Activated T-helper 1 cell treated with anti-CD3 and anti-CD28 coated beads, Interleukin-12 subunit alpha, Interleukin-12 subunit beta, Interleukin-2, Interleukin-4 antibody, amounts not matched to agents 30 ng/mL and 10 ng/mL and 1 ng/mL, durations not matched to agents 14 hours and 24 hours and 36 hours (primary cell): ENCODE measurements at regions of chr15 and their contacts with region 1.

Region 1: DNA sequence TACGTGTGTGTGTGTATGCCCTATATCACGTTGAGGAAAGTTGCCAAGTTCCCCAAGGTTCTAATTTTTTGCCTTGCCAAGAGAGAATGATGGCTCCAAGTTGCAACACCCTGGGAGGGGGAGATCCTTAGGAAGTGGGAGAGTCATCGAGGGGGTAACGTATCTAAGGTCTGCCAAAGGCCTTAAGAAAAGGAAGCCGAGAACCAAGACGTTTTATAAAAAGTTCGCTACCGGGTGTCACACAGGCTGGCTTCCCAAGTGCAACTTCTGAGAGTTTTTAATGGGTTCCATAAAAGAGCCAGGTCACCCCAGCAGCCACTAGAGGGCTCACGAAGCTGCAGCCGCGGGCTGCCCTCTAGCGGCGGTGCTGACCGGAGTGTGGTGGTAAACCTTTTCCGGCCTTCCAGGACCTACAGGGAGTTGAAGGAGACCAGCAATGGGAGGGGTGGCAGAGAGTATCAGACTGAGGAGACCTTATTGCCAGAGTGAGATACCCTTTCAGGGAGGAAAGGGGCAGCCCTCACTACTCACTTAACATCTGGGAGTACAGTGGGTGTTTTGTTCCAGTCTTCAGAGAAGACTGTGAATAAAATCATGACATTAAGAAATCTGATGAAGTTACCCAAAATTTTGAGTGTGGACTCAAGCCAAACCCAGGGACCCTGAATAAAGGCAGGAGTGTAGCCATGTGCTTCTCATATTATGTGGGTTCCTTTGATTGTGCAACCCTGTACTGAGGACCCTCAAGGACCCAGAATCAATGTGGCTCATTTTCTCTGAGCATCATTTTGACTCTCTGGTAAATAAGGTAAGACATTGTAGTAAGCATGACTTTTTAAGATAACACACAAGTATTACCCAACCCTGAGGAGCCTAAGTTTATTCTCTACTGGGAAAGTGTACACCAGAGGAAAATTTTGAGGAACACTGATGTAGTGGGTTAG is 2.5 kb upstream of the RFX7 start:
- DNase-seq: peak; percentile 85
- H3K4me3 Mint-ChIP-seq: peak overlapping the region; percentile 82
- H3K27ac Mint-ChIP-seq: peak overlapping the region; percentile 82
- H3K4me1 Mint-ChIP-seq: peaks cover 36% of the 10 kb centered on the region
- H3K27me3 Mint-ChIP-seq: peaks cover under 1% of the 10 kb centered on the region

Region 2: GRCh38 chr15:55649054-55649423 is 597.1 kb before region 1 on chr15:
- intact Hi-C with region 1: loop called (anchors 5 kb)
- DNase-seq: no peak
- H3K4me3 Mint-ChIP-seq: no peak overlapping the region
- H3K27ac Mint-ChIP-seq: no peak overlapping the region
- H3K4me1 Mint-ChIP-seq: no peaks in the 10 kb centered on the region
- H3K27me3 Mint-ChIP-seq: peaks cover 7% of the 10 kb centered on the region

Region 3: GRCh38 chr15:56040081-56041035 is 205.8 kb before region 1 on chr15:
- intact Hi-C with region 1: loop called (anchors 2 kb)
- DNase-seq: no peak
- H3K4me3 Mint-ChIP-seq: no peak overlapping the region
- H3K27ac Mint-ChIP-seq: no peak overlapping the region
- H3K4me1 Mint-ChIP-seq: peaks cover 39% of the 10 kb centered on the region
- H3K27me3 Mint-ChIP-seq: no peaks in the 10 kb centered on the region

Region 4: DNA sequence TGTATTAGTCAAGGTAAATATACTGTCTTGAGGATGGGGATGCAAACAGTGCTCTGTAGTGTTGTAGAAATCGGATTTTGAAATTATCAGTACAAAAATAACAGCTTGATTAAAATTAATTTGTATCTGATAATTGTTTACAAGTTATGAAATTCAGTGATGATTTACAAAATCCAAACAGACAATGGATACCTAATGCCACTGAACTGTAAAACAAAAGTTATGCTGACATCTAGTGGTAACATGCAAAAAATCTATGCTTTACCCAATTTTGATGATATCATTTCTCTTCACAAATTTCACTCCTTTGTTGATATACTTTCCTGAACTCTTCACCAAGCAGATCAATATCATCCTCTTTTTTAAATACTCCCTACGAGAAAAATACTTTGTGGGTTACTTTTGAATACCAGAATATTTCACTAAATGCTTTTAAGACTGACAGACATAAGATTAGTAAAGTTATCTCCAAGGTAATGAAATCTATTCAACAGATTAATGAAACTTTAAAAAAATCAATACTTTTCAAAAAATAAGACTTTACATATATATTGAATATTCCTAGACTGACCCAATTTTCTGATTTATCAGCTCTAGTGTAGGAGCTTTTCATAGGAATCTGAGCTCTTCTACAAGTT is 182.8 kb after region 1 on chr15:
- intact Hi-C with region 1: loop called (anchors 1 kb)
- DNase-seq: no peak
- H3K4me3 Mint-ChIP-seq: no peak overlapping the region
- H3K27ac Mint-ChIP-seq: no peak overlapping the region
- H3K4me1 Mint-ChIP-seq: no peaks in the 10 kb centered on the region
- H3K27me3 Mint-ChIP-seq: no peaks in the 10 kb centered on the region

Region 5: GRCh38 chr15:56765251-56765650 is 519.1 kb after region 1 on chr15:
- intact Hi-C with region 1: loop called (anchors 10 kb)
- DNase-seq: peak; percentile 10
- H3K4me3 Mint-ChIP-seq: peak overlapping the region; percentile 16
- H3K27ac Mint-ChIP-seq: peak overlapping the region; percentile 83
- H3K4me1 Mint-ChIP-seq: peaks cover 40% of the 10 kb centered on the region
- H3K27me3 Mint-ChIP-seq: no peaks in the 10 kb centered on the region